B cell (primary cell): ENCODE measurements at regions of chr2 and their contacts with region 1.

Region 1: GRCh38 chr2:240434728-240435456 is 571 bp upstream of the GPC1 start:
- DNase-seq: peak; percentile 91
- ATAC-seq: peak; percentile 87
- H3K4me3 ChIP-seq: peak overlapping the region in 4 of 5 experiments; percentile 33 to 74 (median 54)
- H3K4me3 Mint-ChIP-seq: peak overlapping the region; percentile 87
- H3K27ac ChIP-seq: no peak overlapping the region
- H3K27ac Mint-ChIP-seq: peak overlapping the region; percentile 83
- H3K4me1 ChIP-seq: peaks cover 24 to 27% of the 10 kb centered on the region in 2 donors
- H3K4me1 Mint-ChIP-seq: peaks cover 10% of the 10 kb centered on the region
- H3K27me3 ChIP-seq: peaks cover 0 to 46% (median 13%) of the 10 kb centered on the region in 4 experiments
- H3K27me3 Mint-ChIP-seq: peaks cover 10% of the 10 kb centered on the region
- CTCF ChIP-seq: no peak

Region 2: DNA sequence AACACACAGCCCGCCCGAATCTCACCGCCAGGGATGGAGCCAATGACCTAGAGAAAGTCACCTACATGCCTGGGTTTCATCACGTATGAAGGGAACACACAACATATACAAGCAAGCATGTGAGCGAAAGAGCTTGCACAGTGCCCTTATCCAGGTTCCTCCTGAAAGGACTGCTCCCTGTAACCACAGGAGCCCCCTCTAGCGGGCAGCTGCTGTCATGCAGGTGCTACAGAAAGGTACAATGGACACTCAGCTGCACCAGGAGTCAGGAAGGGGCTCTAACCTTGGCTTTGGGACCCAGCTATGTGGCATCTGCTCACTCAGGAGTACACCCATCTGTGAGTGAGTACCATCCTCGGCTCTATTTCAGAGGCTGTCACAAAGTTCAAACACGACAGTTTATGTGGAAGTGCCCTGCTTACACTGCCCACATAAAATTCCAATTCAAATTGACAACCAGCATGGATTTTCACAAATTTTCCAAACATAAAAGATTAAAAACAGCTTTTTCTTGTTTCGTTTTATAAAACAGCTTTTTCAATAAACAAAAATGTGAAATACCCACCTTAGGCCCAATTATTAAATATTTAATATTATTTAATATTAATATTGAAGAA is 413.3 kb before region 1 on chr2:
- CTCF ChIA-PET with region 1: no interaction called
- POLR2A ChIA-PET with region 1: no interaction called
- intact Hi-C with region 1: loop called (anchors 10 kb)
- DNase-seq: peak; percentile 67
- ATAC-seq: no peak
- H3K4me3 ChIP-seq: no peak overlapping the region
- H3K4me3 Mint-ChIP-seq: no peak overlapping the region
- H3K27ac ChIP-seq: no peak overlapping the region
- H3K27ac Mint-ChIP-seq: no peak overlapping the region
- H3K4me1 ChIP-seq: peaks cover 11 to 15% of the 10 kb centered on the region in 2 donors
- H3K4me1 Mint-ChIP-seq: peaks cover 19% of the 10 kb centered on the region
- H3K27me3 ChIP-seq: no peaks in the 10 kb centered on the region
- H3K27me3 Mint-ChIP-seq: no peaks in the 10 kb centered on the region
- CTCF ChIP-seq: peak; percentile 84

Region 3: GRCh38 chr2:240136013-240136670 is 298.8 kb before region 1 on chr2 and contains the start of gene COPS9:
- CTCF ChIA-PET with region 1: no interaction called
- POLR2A ChIA-PET with region 1: no interaction called
- intact Hi-C with region 1: loop called (anchors 5 kb)
- DNase-seq: peak; percentile 89
- ATAC-seq: peak; percentile 88
- H3K4me3 ChIP-seq: peak within 1 kb of the TSS; percentile 63 to 87 (median 67)
- H3K4me3 Mint-ChIP-seq: peak within 1 kb of the TSS; percentile 93
- H3K27ac ChIP-seq: peak within 1 kb of the TSS in 1 of 2 donors; percentile 68
- H3K27ac Mint-ChIP-seq: peak within 1 kb of the TSS; percentile 84
- H3K4me1 ChIP-seq: peaks cover 12 to 22% of the 10 kb centered on the region in 2 donors
- H3K4me1 Mint-ChIP-seq: peaks cover 29% of the 10 kb centered on the region
- H3K27me3 ChIP-seq: no peaks in the 10 kb centered on the region
- H3K27me3 Mint-ChIP-seq: peaks cover 3% of the 10 kb centered on the region
- CTCF ChIP-seq: no peak
- total RNA-seq, gene COPS9: 40.4 and 48.7 TPM in 2 replicates

Region 4: GRCh38 chr2:240217431-240218239 is 217.3 kb before region 1 on chr2:
- CTCF ChIA-PET with region 1: no interaction called
- POLR2A ChIA-PET with region 1: no interaction called
- intact Hi-C with region 1: no loop called
- DNase-seq: no peak
- ATAC-seq: peak; percentile 24
- H3K4me3 ChIP-seq: no peak overlapping the region
- H3K4me3 Mint-ChIP-seq: no peak overlapping the region
- H3K27ac ChIP-seq: no peak overlapping the region
- H3K27ac Mint-ChIP-seq: no peak overlapping the region
- H3K4me1 ChIP-seq: no peaks in the 10 kb centered on the region
- H3K4me1 Mint-ChIP-seq: no peaks in the 10 kb centered on the region
- H3K27me3 ChIP-seq: no peaks in the 10 kb centered on the region
- H3K27me3 Mint-ChIP-seq: no peaks in the 10 kb centered on the region
- CTCF ChIP-seq: no peak

Region 5: DNA sequence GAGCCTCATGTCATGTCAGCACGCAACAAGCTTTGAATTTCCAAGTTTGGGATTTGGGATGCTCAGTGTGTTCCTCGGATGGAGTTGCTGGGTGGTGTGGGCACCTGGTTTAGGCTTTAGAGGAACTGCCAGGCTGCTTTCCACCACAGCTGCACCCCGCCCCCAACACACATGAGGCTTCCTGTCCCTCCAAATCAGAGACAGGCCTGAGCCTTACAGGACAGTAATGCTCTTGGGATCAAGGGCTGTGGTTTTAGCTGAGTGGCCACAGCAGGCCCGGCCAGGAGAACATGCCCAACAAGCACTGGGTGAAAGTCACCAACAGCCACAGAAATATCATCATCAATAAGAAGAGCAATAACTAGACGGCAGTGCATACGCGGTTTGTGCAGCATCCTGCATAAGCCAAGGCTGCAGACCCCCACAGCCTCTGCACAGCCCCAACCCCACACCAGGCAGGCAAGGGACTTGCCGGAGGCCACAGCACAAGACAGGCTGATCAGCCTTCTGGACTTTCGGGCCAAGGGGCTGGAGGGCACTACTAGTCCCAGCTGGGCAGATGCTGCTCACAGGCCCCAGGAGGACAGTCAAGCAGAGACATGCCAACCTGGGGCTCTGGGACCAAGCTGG is 29.1 kb before region 1 on chr2:
- CTCF ChIA-PET with region 1: no interaction called
- POLR2A ChIA-PET with region 1: no interaction called
- intact Hi-C with region 1: no loop called
- DNase-seq: no peak
- ATAC-seq: no peak
- H3K4me3 ChIP-seq: no peak overlapping the region
- H3K4me3 Mint-ChIP-seq: no peak overlapping the region
- H3K27ac ChIP-seq: no peak overlapping the region
- H3K27ac Mint-ChIP-seq: no peak overlapping the region
- H3K4me1 ChIP-seq: no peaks in the 10 kb centered on the region
- H3K4me1 Mint-ChIP-seq: no peaks in the 10 kb centered on the region
- H3K27me3 ChIP-seq: no peaks in the 10 kb centered on the region
- H3K27me3 Mint-ChIP-seq: peaks cover 14% of the 10 kb centered on the region
- CTCF ChIP-seq: no peak

Region 6: DNA sequence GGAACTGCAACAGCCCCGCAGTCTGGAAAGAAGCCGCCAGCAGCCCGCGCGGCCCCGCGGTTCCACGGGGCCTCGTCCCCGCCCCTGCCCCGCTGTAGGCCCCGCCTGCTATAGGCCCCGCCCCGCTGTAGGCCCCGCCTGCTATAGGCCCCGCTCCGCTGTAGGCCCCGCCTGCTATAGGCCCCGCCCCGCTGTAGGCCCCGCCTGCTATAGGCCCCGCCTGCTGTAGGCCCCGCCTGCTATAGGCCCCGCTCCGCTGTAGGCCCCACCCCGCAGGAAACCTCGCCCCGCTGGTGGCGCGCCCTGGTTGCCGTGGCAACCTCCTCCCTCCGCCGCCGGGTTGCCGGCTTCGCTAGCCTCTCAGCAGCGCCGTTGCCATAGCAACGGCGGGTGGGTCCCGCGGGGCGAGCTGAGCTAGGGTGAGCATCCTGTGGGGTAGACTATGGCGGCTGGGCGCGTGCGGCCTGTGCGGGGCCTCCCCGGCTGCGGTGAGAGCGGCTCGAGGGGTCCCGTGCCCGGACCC is 397.4 kb after region 1 on chr2:
- CTCF ChIA-PET with region 1: no interaction called
- POLR2A ChIA-PET with region 1: no interaction called
- intact Hi-C with region 1: loop called (anchors 2 kb)
- DNase-seq: peak; percentile 98
- ATAC-seq: peak; percentile 92
- H3K4me3 ChIP-seq: peak overlapping the region in 3 of 5 experiments; percentile 39 to 56 (median 41)
- H3K4me3 Mint-ChIP-seq: peak overlapping the region; percentile 73
- H3K27ac ChIP-seq: no peak overlapping the region
- H3K27ac Mint-ChIP-seq: no peak overlapping the region
- H3K4me1 ChIP-seq: peaks cover 6 to 12% of the 10 kb centered on the region in 2 donors
- H3K4me1 Mint-ChIP-seq: peaks cover 6% of the 10 kb centered on the region
- H3K27me3 ChIP-seq: peaks cover 0 to 36% (median 20%) of the 10 kb centered on the region in 4 experiments
- H3K27me3 Mint-ChIP-seq: peaks cover 29% of the 10 kb centered on the region
- CTCF ChIP-seq: no peak